ENCODE measurements at regions of chr6 and their contacts with region 1.

Region 1: DNA sequence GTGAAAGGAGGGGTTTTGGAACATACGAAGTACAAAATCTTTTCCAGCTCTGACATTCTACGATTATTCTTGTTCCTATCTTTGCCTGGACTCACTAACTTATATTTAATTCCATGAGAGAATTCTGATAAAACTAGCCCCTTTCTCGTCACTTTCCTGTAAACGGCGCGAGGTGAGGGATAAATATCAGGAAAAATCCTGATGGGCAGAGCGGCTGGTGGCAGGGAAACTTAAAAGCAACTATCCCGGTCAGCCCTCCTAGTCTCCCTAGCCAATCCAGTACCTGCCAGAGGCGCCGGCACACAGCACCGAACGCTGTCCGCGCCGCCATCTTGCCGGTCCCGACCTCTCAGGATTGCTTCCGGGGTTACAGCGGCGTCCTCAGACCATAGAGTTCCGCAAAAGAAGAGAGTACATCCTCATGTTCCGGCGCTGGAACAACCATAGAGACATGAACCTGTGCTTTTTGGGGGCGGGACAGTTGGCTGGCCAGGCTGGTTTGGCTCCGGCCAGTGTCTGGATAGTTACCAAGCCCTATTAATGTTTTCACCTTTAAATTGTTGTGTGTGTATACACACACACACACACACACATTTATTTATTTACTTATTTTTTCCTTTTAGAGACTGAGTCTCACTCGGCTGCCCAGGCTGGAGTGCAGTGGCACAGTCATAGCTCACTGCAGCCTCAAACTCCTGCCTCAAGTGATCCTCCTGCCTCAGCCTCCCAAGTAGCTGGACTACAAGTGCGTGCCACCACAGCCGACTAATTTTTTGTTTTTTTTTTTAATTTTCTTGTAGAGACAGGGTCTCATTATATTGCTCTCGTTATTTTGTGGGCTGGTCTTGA is at the start of gene MRPS10:
- DNase-seq: peak; percentile 96
- H3K4me3 Mint-ChIP-seq: peak within 1 kb of the TSS; percentile 94
- H3K27ac Mint-ChIP-seq: peak within 1 kb of the TSS; percentile 88
- H3K4me1 Mint-ChIP-seq: peaks cover 37% of the 10 kb centered on the region
- H3K27me3 Mint-ChIP-seq: no peaks in the 10 kb centered on the region
- total RNA-seq, gene MRPS10: 39.7 to 40.7 TPM

Region 2: GRCh38 chr6:41779793-41780545 is 437.8 kb before region 1 on chr6 and contains the start of gene FRS3:
- CTCF ChIA-PET with region 1: interaction called, 3 read pairs
- intact Hi-C with region 1: loop called (anchors 1 kb)
- DNase-seq: peak; percentile 99
- H3K4me3 Mint-ChIP-seq: peak within 1 kb of the TSS; percentile 82
- H3K27ac Mint-ChIP-seq: no peak within 1 kb of the TSS
- H3K4me1 Mint-ChIP-seq: peaks cover 11% of the 10 kb centered on the region
- H3K27me3 Mint-ChIP-seq: peaks cover 4% of the 10 kb centered on the region
- total RNA-seq, gene FRS3: 4.0 to 4.2 TPM

Region 3: DNA sequence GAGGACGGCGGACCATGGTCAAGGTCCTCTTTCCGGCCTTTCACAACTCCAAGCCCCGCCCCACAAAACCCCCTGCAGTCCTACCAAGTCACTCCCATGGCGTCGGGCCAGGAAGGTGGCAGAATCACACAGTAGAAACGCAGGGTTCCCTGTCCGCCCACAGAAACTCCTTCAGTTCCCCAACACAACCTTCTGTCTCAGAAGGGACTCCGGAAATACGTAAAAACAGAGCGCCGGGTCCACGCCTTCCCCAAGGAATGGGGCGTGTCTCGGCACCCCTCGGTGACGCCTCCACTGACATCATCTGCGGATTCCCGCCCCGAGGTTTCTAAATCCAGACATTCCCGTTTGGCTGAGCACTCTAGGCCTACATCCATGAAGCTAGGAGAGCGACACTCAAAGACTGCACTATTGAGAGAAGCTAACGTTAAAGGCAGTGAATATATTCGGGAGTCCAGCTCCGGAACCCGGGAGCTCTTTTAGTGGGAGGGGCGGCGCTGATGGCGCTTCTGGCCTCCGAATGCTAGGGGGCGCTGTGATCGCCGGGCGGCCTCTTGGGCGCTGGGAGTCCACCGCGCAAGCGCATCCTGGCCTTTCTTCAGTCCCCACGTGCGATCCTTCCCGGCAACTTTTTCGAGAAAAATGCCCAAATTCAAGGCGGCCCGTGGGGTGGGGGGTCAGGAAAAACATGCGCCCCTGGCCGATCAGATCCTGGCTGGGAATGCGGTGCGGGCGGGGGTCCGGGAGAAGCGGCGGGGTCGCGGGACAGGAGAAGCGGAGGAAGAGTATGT is 296.6 kb before region 1 on chr6 and contains the starts of genes BYSL and MED20:
- CTCF ChIA-PET with region 1: no interaction called
- intact Hi-C with region 1: loop called (anchors 1 kb)
- DNase-seq: peak; percentile 97
- H3K4me3 Mint-ChIP-seq: peak within 1 kb of the TSS; percentile 91
- H3K27ac Mint-ChIP-seq: peak within 1 kb of the TSS; percentile 97
- H3K4me1 Mint-ChIP-seq: peaks cover 54% of the 10 kb centered on the region
- H3K27me3 Mint-ChIP-seq: no peaks in the 10 kb centered on the region
- total RNA-seq, gene BYSL: 49.8 TPM
- total RNA-seq, gene MED20: 24.0 to 27.4 TPM

Region 4: DNA sequence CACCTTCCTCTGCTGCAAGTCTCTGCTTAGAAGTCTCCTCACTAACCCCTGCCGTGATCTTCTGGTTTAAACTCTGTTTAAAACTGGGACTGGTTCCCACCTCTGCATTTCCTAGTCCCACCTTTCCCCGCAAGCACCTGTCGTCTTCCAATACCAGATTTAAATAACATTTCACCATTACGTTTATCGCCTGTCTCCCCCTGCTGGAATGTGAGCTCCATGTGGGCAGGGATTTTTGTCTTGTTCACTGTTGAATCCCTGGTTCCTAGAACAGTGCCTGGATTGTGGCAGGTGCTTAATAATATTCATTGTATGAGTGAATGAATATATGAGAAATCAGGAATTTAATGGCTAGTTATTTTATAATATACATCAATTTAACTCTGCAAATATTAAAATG is 41.9 kb before region 1 on chr6:
- CTCF ChIA-PET with region 1: no interaction called
- intact Hi-C with region 1: loop called (anchors 5 kb)
- DNase-seq: peak; percentile 13
- H3K4me3 Mint-ChIP-seq: no peak overlapping the region
- H3K27ac Mint-ChIP-seq: no peak overlapping the region
- H3K4me1 Mint-ChIP-seq: no peaks in the 10 kb centered on the region
- H3K27me3 Mint-ChIP-seq: no peaks in the 10 kb centered on the region

Region 5: GRCh38 chr6:42279144-42279781 is 61.5 kb after region 1 on chr6:
- CTCF ChIA-PET with region 1: no interaction called
- intact Hi-C with region 1: no loop called
- DNase-seq: peak; percentile 26
- H3K4me3 Mint-ChIP-seq: no peak overlapping the region
- H3K27ac Mint-ChIP-seq: no peak overlapping the region
- H3K4me1 Mint-ChIP-seq: peaks cover 36% of the 10 kb centered on the region
- H3K27me3 Mint-ChIP-seq: no peaks in the 10 kb centered on the region

Region 6: GRCh38 chr6:42453031-42453653 is 235.4 kb after region 1 on chr6:
- CTCF ChIA-PET with region 1: no interaction called
- intact Hi-C with region 1: loop called (anchors 5 kb)
- DNase-seq: peak; percentile 87
- H3K4me3 Mint-ChIP-seq: peak overlapping the region; percentile 88
- H3K27ac Mint-ChIP-seq: peak overlapping the region; percentile 81
- H3K4me1 Mint-ChIP-seq: peaks cover 32% of the 10 kb centered on the region
- H3K27me3 Mint-ChIP-seq: peaks cover 7% of the 10 kb centered on the region

Region 7: DNA sequence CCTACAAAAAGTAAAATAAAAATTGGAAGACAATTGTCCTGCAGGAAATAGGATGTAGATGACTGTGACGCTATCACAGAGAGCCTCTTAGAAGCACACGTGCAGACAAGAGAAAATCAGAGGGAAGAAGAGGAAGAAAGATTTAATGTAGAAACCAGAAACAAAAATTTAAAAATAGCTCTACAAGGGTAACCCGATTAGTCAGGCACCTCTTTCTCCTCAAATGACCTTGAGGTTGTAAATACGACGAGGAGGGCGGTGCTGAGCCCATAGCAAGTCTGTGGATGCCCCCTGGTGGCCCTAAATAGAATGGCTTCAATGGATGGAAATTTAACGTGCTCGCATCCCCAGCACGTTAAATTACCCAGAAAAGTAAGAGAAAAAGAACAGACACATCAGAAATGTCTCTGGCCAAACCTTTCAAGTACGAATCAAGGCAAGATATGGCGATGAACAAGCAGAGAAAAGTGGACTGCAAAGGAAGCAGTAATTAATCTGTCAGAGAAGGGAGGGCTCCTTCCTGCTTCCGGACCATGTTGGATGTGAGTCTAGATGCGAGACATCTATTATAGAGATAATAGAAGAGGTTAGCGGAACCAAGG is 508.8 kb after region 1 on chr6:
- CTCF ChIA-PET with region 1: no interaction called
- intact Hi-C with region 1: loop called (anchors 1 kb)
- DNase-seq: peak; percentile 84
- H3K4me3 Mint-ChIP-seq: peak overlapping the region; percentile 76
- H3K27ac Mint-ChIP-seq: peak overlapping the region; percentile 91
- H3K4me1 Mint-ChIP-seq: peaks cover 15% of the 10 kb centered on the region
- H3K27me3 Mint-ChIP-seq: no peaks in the 10 kb centered on the region

Region 8: GRCh38 chr6:42890311-42891198 is 672.8 kb after region 1 on chr6:
- CTCF ChIA-PET with region 1: interaction called, 3 read pairs
- intact Hi-C with region 1: loop called (anchors 5 kb)
- DNase-seq: peak; percentile 96
- H3K4me3 Mint-ChIP-seq: peak overlapping the region; percentile 82
- H3K27ac Mint-ChIP-seq: peak overlapping the region; percentile 95
- H3K4me1 Mint-ChIP-seq: peaks cover 32% of the 10 kb centered on the region
- H3K27me3 Mint-ChIP-seq: no peaks in the 10 kb centered on the region